ENCODE measurements at regions of chr17 and their contacts with region 1.

Region 1: DNA sequence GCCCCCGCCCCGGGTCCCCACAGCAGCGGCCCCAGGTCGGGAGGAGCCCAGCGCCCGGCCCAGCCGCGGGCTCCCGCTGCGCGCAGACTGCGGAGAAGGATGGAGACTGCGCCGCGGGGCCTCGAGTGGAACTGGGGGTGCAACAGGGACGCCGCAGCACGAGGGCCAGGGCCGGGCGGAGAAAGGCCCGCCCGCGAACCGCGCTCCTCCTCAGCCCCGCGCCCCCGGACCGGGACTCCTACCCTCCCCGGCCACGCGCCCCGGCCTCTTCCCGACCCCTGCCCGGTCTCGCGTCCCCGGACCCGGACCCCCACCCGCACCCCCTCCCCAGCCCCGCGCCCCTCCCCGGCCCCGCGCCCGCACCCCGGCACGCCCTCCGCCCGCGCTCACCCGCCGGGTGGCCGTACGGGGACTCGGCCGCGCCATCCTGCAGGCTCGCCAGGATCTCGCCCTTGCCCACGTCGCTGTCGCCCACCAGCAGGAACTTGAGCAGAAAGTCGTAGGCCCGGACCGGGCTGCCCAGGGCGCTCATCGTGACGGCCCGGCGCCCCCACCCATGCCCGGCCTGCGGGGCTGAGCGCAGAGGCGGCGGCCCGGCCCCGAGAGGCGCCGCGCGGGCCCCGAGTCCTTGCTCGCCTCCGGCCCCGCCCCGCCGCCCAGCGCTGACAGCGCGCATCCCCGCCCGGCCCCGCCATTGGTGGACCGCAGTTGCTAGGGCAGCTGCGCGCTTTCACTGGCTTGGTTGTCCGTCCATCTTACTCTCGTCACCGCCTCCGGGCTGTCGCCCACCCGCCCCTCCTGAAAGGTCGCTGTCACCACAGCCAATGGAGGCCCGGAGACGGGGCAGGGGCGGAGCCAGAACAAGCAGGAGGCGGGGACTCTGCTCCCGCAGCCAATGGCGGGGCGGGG is at the start of gene RAB40B:
- DNase-seq: peak; percentile 98
- ATAC-seq: peak; percentile 96
- H3K4me3 ChIP-seq: peak within 1 kb of the TSS; percentile 88
- H3K27ac ChIP-seq: no peak within 1 kb of the TSS
- H3K4me1 ChIP-seq: peaks cover 5% of the 10 kb centered on the region; the same call in 1 of the 2 replicates
- H3K27me3 ChIP-seq: no peaks in the 10 kb centered on the region
- CTCF ChIP-seq: no peak
- total RNA-seq, gene RAB40B: 16.5 and 22.4 TPM in 2 replicates

Region 2: DNA sequence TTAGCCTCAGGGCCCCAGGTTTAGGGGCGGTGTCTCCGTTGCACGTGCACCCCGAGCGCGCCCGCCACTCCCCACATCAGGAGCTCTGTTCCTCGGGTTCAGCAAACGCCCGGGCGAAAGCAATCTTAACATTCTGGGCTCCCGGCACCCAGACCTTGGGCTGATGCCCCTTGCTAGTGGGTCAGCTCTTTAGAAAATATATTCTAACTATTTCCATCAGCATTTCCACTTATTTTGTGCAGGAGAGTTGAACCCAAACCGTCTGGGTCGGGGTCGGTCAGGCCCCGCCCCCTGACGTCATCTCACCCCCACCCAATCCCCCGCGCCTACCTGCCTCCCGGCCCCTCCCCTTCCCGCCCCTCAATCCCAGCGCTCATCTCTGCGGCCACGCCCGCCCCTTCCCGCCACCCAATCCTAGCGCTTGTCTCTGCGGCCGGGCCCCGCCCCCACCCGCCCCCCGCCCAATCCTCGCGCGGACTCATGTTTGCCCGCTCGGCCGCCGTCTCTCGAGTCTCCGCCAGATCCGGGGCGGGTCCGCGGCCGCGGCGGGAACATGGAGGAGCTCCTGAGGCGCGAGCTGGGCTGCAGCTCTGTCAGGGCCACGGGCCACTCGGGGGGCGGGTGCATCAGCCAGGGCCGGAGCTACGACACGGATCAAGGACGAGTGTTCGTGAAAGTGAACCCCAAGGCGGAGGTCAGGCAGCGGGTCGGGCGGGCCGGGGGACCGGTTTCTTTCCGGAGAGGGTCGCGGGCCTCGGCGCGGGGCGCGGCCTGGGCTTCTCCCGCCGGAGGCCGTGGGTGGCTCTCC is 18.1 kb after region 1 on chr17 and contains the start of gene FN3KRP:
- CTCF ChIA-PET with region 1: no interaction called
- POLR2A ChIA-PET with region 1: interaction called, 4 read pairs
- intact Hi-C with region 1: loop called (anchors 1 kb)
- DNase-seq: peak; percentile 89
- ATAC-seq: peak; percentile 88
- H3K4me3 ChIP-seq: peak within 1 kb of the TSS; percentile 100
- H3K27ac ChIP-seq: peak within 1 kb of the TSS; percentile 25; the same call in 1 of the 2 replicates
- H3K4me1 ChIP-seq: 0 out of 2 replicates have a peak, but pooled peaks cover 8% of the 10 kb centered on the region
- H3K27me3 ChIP-seq: no peaks in the 10 kb centered on the region
- CTCF ChIP-seq: no peak
- total RNA-seq, gene FN3KRP: 32.9 and 37.4 TPM in 2 replicates